ENCODE measurements at regions of chr6 and their contacts with region 1.

Region 1: GRCh38 chr6:130825772-130826441 is 1.3 kb upstream of the SMLR1 start:
- DNase-seq: no peak
- ATAC-seq: no peak
- H3K4me3 ChIP-seq: peak overlapping the region in 1 of 3 experiments; percentile 83; a peak in 1 of 6 replicates
- H3K27ac ChIP-seq: peak overlapping the region; percentile 95
- H3K4me1 ChIP-seq: peaks cover 91% of the 10 kb centered on the region
- H3K27me3 ChIP-seq: no peaks in the 10 kb centered on the region; a peak in 1 of 5 replicates
- CTCF ChIP-seq: peak; percentile 41
- EP300 ChIP-seq: no peak
- POLR2A ChIP-seq: no peak
- RAD21 ChIP-seq: no peak

Region 2: GRCh38 chr6:130322673-130323268 is 503.1 kb before region 1 on chr6:
- CTCF ChIA-PET with region 1: no interaction called
- POLR2A ChIA-PET with region 1: no interaction called
- in situ Hi-C with region 1: no loop called
- intact Hi-C with region 1: loop called (anchors 5 kb)
- DNase-seq: peak; percentile 55
- ATAC-seq: peak; percentile 77
- H3K4me3 ChIP-seq: no peak overlapping the region
- H3K27ac ChIP-seq: no peak overlapping the region
- H3K4me1 ChIP-seq: no peaks in the 10 kb centered on the region
- H3K27me3 ChIP-seq: no peaks in the 10 kb centered on the region
- CTCF ChIP-seq: peak; percentile 81
- EP300 ChIP-seq: no peak
- POLR2A ChIP-seq: no peak
- RAD21 ChIP-seq: peak; percentile 71

Region 3: GRCh38 chr6:130794738-130795137 is 31.2 kb before region 1 on chr6:
- CTCF ChIA-PET with region 1: no interaction called
- POLR2A ChIA-PET with region 1: interaction called, 4 read pairs
- in situ Hi-C with region 1: no loop called
- intact Hi-C with region 1: loop called (anchors 5 kb)
- DNase-seq: no peak
- ATAC-seq: no peak
- H3K4me3 ChIP-seq: no peak overlapping the region
- H3K27ac ChIP-seq: no peak overlapping the region
- H3K4me1 ChIP-seq: peaks cover 6% of the 10 kb centered on the region; the same call in 1 of the 2 replicates
- H3K27me3 ChIP-seq: no peaks in the 10 kb centered on the region
- CTCF ChIP-seq: no peak
- EP300 ChIP-seq: no peak
- POLR2A ChIP-seq: no peak
- RAD21 ChIP-seq: no peak

Region 4: DNA sequence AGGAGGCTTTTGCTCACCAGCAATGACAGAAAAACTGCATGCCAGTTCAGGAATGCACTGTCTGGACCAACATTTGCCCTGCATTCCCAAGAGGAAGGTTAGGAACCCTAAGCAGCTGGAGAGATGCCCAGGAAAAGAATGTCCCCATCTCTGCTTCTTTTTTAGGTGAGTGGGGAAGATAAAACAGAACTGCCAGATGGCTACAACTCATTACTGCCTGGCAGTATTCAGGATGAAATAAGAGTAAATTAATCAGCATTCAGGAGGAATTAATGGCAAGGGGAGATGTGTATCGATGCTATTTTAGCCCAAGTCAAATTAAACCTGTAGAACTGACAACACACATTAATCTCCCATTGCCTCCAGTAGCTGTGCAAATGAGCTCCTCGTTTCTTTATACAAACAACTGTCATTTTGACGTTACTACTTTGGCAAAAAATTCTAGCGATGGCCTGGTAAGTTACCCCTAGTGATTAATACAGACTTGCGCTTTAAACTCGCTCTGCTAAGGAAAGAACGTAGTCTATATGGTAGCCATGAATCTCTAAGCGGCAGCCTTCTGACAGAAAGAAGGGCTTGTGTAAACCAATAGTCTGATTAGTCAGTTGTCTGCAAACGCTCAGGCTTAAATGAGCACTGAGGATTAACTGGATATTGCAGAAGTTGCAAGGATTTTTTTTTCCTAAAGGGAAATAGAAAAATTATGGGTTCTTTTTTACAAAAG is 15.4 kb before region 1 on chr6:
- CTCF ChIA-PET with region 1: no interaction called
- POLR2A ChIA-PET with region 1: interaction called, 175 read pairs
- in situ Hi-C with region 1: no loop called
- intact Hi-C with region 1: loop called (anchors 1 kb)
- DNase-seq: no peak
- ATAC-seq: peak; percentile 26; the same call in 2 of the 3 replicates
- H3K4me3 ChIP-seq: no peak overlapping the region
- H3K27ac ChIP-seq: no peak overlapping the region
- H3K4me1 ChIP-seq: peaks cover 44% of the 10 kb centered on the region
- H3K27me3 ChIP-seq: no peaks in the 10 kb centered on the region
- CTCF ChIP-seq: no peak
- EP300 ChIP-seq: no peak
- POLR2A ChIP-seq: no peak
- RAD21 ChIP-seq: no peak

Region 5: GRCh38 chr6:130836055-130836640 is 10.2 kb after region 1 on chr6:
- CTCF ChIA-PET with region 1: no interaction called
- POLR2A ChIA-PET with region 1: interaction called, 23 read pairs
- in situ Hi-C with region 1: no loop called
- intact Hi-C with region 1: no loop called
- DNase-seq: no peak
- ATAC-seq: no peak
- H3K4me3 ChIP-seq: no peak overlapping the region
- H3K27ac ChIP-seq: no peak overlapping the region
- H3K4me1 ChIP-seq: peaks cover 53% of the 10 kb centered on the region
- H3K27me3 ChIP-seq: no peaks in the 10 kb centered on the region
- CTCF ChIP-seq: no peak
- EP300 ChIP-seq: no peak
- POLR2A ChIP-seq: no peak
- RAD21 ChIP-seq: no peak

Region 6: DNA sequence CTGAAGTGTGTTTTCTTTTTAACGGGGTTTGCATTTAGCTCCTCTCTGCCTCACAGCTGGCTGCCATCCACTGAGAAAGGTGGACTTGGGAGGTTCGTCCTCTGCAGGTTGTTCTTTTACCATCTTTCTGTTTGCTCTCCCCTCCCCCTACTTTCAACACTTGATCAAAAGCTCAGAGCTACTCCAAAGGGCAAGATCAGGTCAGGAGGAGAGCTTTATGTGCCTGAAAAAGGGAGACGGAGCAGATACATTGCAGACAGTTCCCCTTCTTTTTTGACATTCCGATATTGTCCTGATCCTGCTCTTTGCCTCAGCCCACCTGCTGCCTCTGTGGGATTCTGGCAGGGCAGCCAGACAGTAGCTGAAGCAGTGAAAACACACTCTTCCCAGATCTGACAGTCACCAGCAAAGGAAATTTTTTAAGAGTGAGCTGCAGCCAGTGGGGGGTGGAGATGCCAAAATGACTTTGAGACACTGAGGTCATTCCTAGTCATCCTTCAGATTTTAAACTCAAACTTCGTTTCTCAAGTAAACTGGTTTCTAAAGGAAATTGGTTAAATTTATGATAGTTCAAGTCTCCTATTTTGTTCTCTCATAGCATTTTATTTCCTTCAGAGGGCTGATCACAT is 27.8 kb after region 1 on chr6:
- CTCF ChIA-PET with region 1: no interaction called
- POLR2A ChIA-PET with region 1: interaction called, 27 read pairs
- in situ Hi-C with region 1: no loop called
- intact Hi-C with region 1: no loop called
- DNase-seq: peak; percentile 88
- ATAC-seq: peak; percentile 78
- H3K4me3 ChIP-seq: peak overlapping the region in 2 of 3 experiments; percentile 13 to 31; a peak in 3 of 6 replicates
- H3K27ac ChIP-seq: peak overlapping the region; percentile 77
- H3K4me1 ChIP-seq: peaks cover 88% of the 10 kb centered on the region
- H3K27me3 ChIP-seq: no peaks in the 10 kb centered on the region
- CTCF ChIP-seq: 0 out of 2 replicates have a peak, but pooled peaks have one; percentile 15
- EP300 ChIP-seq: peak in 1 of 2 experiments; percentile 93; a peak in 2 of 4 replicates
- POLR2A ChIP-seq: no peak
- RAD21 ChIP-seq: peak; percentile 7; the same call in 1 of the 2 replicates

Region 7: GRCh38 chr6:130863415-130864230 is 37.7 kb after region 1 on chr6:
- CTCF ChIA-PET with region 1: no interaction called
- POLR2A ChIA-PET with region 1: interaction called, 30 read pairs
- in situ Hi-C with region 1: no loop called
- intact Hi-C with region 1: loop called (anchors 2 kb)
- DNase-seq: peak; percentile 98
- ATAC-seq: peak; percentile 93
- H3K4me3 ChIP-seq: peak overlapping the region in 1 of 3 experiments; percentile 15; a peak in 1 of 6 replicates
- H3K27ac ChIP-seq: peak overlapping the region; percentile 67
- H3K4me1 ChIP-seq: peaks cover 68% of the 10 kb centered on the region
- H3K27me3 ChIP-seq: no peaks in the 10 kb centered on the region
- CTCF ChIP-seq: no peak
- EP300 ChIP-seq: peak; percentile 72 to 100; a peak in 3 of 4 replicates
- POLR2A ChIP-seq: no peak
- RAD21 ChIP-seq: 0 out of 2 replicates have a peak, but pooled peaks have one; percentile 29

Measured in HepG2 (cell line).